ENCODE measurements at regions of chr1 and their contacts with region 1.

Region 1: GRCh38 chr1:117758444-117759316 is 152.8 kb downstream of the TENT5C start:
- DNase-seq: peak; percentile 35 to 68 (median 61)
- ATAC-seq: peak; percentile 95
- H3K4me3 ChIP-seq: peak overlapping the region; percentile 59
- H3K4me3 Mint-ChIP-seq: peak overlapping the region; percentile 66 to 93 (median 84)
- H3K27ac ChIP-seq: no peak overlapping the region
- H3K27ac Mint-ChIP-seq: peak overlapping the region in 4 of 9 donors; percentile 3 to 47 (median 42)
- H3K4me1 ChIP-seq: peaks cover 0 to 3% of the 10 kb centered on the region in 2 donors
- H3K4me1 Mint-ChIP-seq: peaks cover 0 to 16% (median 6%) of the 10 kb centered on the region in 7 donors
- H3K27me3 ChIP-seq: no peaks in the 10 kb centered on the region
- H3K27me3 Mint-ChIP-seq: peaks cover 0 to 43% (median 5%) of the 10 kb centered on the region in 5 donors

Region 2: DNA sequence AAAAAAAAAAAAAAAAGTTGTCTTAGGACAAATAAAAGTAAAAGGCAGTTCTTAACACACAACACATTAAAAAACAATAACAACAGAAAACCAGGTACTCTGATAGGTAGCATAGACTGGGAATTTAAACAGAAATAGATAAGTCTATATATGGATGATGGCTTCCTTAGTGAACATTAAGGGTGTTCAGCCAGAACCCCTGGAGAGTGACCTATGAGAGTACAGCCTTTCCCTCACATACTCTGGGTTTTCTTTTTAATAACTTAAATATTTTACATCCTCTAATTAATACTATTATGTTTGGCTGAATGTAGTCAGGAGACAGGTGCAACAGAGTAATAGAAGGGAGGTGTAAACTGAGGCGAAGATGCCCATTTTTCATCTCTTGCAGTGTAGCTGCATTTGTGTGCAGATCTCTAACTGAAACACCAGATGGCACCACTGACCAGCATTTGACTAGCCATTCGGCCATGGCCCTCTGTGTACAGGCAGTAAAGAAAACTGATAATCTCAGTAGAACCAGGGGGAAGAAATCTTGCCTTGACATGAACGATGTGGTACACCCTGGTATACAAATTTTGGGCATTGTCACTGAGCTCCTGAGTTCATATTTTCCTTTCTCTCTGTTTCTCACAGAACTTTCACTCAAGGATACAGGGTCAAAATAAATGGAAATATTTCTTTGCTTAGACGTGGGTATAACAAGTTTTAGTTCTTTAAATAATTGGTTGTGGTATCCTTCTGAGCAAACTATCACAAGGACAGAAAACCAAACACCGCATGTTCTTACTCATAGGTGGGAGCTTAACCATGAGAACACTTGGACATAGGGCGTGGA is 690.9 kb before region 1 on chr1:
- CTCF ChIA-PET with region 1: no interaction called
- POLR2A ChIA-PET with region 1: no interaction called
- intact Hi-C with region 1: loop called in 1 of 2 experiments (anchors 1 kb)
- DNase-seq: peak in 1 of 9 donors; percentile 26
- ATAC-seq: peak; percentile 87
- H3K4me3 ChIP-seq: no peak overlapping the region
- H3K4me3 Mint-ChIP-seq: no peak overlapping the region
- H3K27ac ChIP-seq: no peak overlapping the region
- H3K27ac Mint-ChIP-seq: peak overlapping the region in 1 of 9 donors; percentile 44
- H3K4me1 ChIP-seq: no peaks in the 10 kb centered on the region
- H3K4me1 Mint-ChIP-seq: peaks cover 5 to 41% (median 11%) of the 10 kb centered on the region in 7 donors
- H3K27me3 ChIP-seq: no peaks in the 10 kb centered on the region
- H3K27me3 Mint-ChIP-seq: no peaks in the 10 kb centered on the region

Region 3: GRCh38 chr1:117312225-117313138 is 446.2 kb before region 1 on chr1:
- CTCF ChIA-PET with region 1: no interaction called
- POLR2A ChIA-PET with region 1: no interaction called
- intact Hi-C with region 1: loop called in 1 of 2 experiments (anchors 1 kb)
- DNase-seq: peak in 6 of 9 donors; percentile 3 to 41 (median 18)
- ATAC-seq: no peak
- H3K4me3 ChIP-seq: no peak overlapping the region
- H3K4me3 Mint-ChIP-seq: no peak overlapping the region
- H3K27ac ChIP-seq: no peak overlapping the region
- H3K27ac Mint-ChIP-seq: no peak overlapping the region
- H3K4me1 ChIP-seq: no peaks in the 10 kb centered on the region
- H3K4me1 Mint-ChIP-seq: peaks cover 0 to 2% (median 0%) of the 10 kb centered on the region in 7 donors
- H3K27me3 ChIP-seq: no peaks in the 10 kb centered on the region
- H3K27me3 Mint-ChIP-seq: peaks cover 0 to 12% (median 0%) of the 10 kb centered on the region in 5 donors

Region 4: DNA sequence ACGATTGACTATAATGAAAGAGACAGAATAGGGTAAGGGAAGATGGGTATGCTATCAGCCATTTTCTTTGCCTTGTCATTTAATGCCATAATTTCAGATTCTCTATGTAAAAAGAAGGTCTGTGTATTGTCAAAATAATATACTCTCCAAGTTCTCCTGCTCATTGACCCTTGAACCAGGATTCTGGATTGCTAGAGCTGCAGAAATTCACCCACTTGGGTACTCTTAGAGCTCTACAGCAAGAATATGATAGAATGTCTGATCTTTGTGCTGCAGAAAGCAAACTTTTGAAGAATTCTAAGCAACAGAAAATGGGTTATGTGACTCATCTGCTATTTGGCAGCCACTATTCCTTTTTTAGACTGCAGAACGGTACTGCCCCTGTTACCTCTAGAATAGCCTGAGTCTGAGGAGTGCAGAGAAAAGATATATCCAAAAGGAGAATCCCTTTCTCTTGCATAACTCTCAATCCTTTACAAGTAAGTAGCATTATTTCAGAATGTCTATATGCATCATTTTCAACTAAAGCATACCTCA is 231.0 kb before region 1 on chr1:
- CTCF ChIA-PET with region 1: interaction called, 130 read pairs
- POLR2A ChIA-PET with region 1: no interaction called
- intact Hi-C with region 1: no loop called
- DNase-seq: no peak
- ATAC-seq: no peak
- H3K4me3 ChIP-seq: no peak overlapping the region
- H3K4me3 Mint-ChIP-seq: no peak overlapping the region
- H3K27ac ChIP-seq: no peak overlapping the region
- H3K27ac Mint-ChIP-seq: no peak overlapping the region
- H3K4me1 ChIP-seq: no peaks in the 10 kb centered on the region
- H3K4me1 Mint-ChIP-seq: no peaks in the 10 kb centered on the region
- H3K27me3 ChIP-seq: no peaks in the 10 kb centered on the region
- H3K27me3 Mint-ChIP-seq: no peaks in the 10 kb centered on the region

Region 5: DNA sequence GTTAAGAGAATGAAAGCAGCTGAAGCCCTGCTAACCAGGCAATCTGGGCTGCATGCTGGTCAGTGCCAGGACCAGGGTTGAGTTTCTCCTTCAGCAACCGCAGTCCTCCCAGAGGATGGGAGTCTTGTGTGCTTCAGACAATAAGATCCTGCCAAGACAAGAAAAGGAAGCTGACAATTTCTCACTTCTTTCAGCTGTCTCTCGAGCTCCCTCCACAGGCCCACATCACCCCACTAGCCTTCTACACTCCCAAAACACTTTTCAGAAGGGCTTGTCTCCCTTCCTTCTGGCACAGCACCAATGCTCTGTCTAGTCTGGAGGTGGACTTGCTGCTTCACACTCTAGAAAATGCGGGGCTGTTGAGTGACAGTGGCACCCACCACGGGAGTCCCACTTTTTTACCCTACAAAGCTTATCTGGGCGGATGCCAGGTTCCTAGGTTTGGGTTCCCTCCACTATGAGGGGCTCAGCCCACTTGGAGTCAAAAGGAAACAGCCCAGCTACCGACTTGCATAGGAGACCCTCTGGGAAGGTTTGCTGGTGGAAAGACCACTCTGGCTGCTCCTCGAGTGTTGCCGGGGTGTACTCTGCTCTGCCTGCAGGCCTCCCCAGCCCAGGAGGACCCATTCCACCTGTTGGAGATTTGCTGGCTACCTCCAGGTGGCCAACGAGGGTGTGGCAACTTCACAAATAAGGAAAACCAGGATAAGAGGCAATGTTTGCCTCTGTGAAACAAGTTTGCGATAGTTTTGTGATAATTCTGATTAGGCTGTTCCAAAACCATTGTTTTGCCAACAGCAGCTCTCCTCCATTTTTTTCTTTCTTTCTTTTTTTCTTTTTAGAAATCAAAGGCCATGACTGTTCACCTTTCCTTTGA is 83.9 kb before region 1 on chr1:
- CTCF ChIA-PET with region 1: interaction called, 5 read pairs
- POLR2A ChIA-PET with region 1: interaction called, 5 read pairs
- intact Hi-C with region 1: loop called (anchors 1 to 2 kb)
- DNase-seq: peak in 7 of 9 donors; percentile 52 to 67 (median 58)
- ATAC-seq: peak; percentile 80
- H3K4me3 ChIP-seq: no peak overlapping the region
- H3K4me3 Mint-ChIP-seq: no peak overlapping the region
- H3K27ac ChIP-seq: no peak overlapping the region
- H3K27ac Mint-ChIP-seq: peak overlapping the region in 3 of 9 donors; percentile 53 to 68 (median 65)
- H3K4me1 ChIP-seq: peaks cover 0 to 5% of the 10 kb centered on the region in 2 donors
- H3K4me1 Mint-ChIP-seq: peaks cover 0 to 25% (median 4%) of the 10 kb centered on the region in 7 donors
- H3K27me3 ChIP-seq: no peaks in the 10 kb centered on the region
- H3K27me3 Mint-ChIP-seq: peaks cover 0 to 32% (median 0%) of the 10 kb centered on the region in 5 donors

Region 6: GRCh38 chr1:117826551-117827078 is 67.9 kb after region 1 on chr1:
- CTCF ChIA-PET with region 1: no interaction called
- POLR2A ChIA-PET with region 1: no interaction called
- intact Hi-C with region 1: no loop called
- DNase-seq: no peak
- ATAC-seq: no peak
- H3K4me3 ChIP-seq: no peak overlapping the region
- H3K4me3 Mint-ChIP-seq: no peak overlapping the region
- H3K27ac ChIP-seq: no peak overlapping the region
- H3K27ac Mint-ChIP-seq: no peak overlapping the region
- H3K4me1 ChIP-seq: no peaks in the 10 kb centered on the region
- H3K4me1 Mint-ChIP-seq: no peaks in the 10 kb centered on the region
- H3K27me3 ChIP-seq: no peaks in the 10 kb centered on the region
- H3K27me3 Mint-ChIP-seq: peaks cover 7 to 32% (median 25%) of the 10 kb centered on the region in 5 donors

Region 7: DNA sequence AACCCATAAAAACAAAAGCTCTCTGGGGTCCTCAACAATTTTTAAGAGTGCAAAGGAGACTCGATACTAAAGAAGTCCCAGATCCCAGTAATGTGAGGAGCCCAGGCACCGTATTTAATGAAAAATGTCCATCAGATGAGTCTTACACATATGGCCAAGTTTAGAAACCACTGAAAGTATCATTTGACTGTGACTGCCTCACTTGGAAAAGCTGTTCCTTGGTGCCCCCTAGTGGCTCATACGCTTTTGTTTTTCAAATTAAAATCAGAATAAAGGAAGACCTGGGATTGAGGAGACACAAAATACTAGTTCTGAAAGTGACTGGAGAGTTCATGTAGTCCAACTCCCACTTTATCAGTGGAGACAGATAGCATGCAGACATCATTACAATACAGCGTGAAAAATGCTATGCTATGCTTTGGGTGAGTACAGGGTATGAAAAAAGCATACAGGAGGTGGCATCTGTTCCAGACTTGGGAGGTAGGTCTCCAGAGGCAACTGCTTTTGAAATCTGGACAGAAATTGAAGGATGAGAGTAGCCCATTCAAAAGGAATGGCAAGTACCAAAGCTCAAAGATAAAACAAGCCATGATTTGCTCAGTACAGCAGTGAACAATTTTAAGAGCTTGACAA is 136.9 kb after region 1 on chr1:
- CTCF ChIA-PET with region 1: interaction called, 3 read pairs
- POLR2A ChIA-PET with region 1: no interaction called
- intact Hi-C with region 1: loop called (anchors 1 to 5 kb)
- DNase-seq: peak; percentile 12 to 59 (median 47)
- ATAC-seq: peak; percentile 65
- H3K4me3 ChIP-seq: no peak overlapping the region
- H3K4me3 Mint-ChIP-seq: no peak overlapping the region
- H3K27ac ChIP-seq: no peak overlapping the region
- H3K27ac Mint-ChIP-seq: peak overlapping the region in 1 of 9 donors; percentile 46
- H3K4me1 ChIP-seq: no peaks in the 10 kb centered on the region
- H3K4me1 Mint-ChIP-seq: peaks cover 0 to 5% (median 3%) of the 10 kb centered on the region in 7 donors
- H3K27me3 ChIP-seq: no peaks in the 10 kb centered on the region
- H3K27me3 Mint-ChIP-seq: no peaks in the 10 kb centered on the region

Measured in naive thymus-derived CD4-positive, alpha-beta T cell (primary cell).